PC-9 (cell line): ENCODE measurements at regions of chr10 and their contacts with region 1.

Region 1: DNA sequence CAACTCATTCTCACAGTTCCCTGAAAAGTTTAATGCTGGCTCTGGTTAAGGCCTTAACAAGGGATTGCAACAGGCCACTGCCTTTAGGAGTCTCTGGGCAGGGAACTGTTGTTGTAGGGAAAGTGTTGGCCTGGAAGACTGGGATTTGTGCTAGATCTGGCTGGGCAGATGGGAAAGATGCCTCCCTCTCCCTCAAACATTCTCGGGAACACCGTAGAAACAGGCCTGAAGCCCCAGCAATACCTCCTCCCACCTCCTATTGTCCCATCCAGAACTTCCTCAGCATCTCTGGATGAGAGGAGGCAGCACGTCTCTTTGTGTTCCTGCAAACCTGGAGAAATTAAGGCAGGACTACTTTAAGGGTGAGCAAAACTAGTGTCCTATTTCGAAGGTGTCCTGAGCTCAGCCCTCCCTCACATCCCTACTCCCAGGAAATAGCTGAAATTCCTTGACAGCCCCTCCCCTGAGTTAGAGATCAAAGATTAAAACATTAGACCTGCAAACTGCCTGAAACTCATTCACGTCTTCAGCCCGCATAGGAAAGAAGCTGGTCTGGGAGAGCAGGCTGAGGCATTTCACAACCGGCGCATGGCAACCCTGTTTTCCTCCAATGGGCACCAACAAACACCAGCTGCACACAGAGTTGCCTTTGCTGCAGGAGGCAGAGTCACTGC is 10.9 kb upstream of the MAP3K8 start:
- DNase-seq: peak; percentile 92 to 96
- H3K4me3 ChIP-seq: 0 out of 2 replicates have a peak overlapping the region, but pooled peaks have one; percentile 24
- H3K27ac ChIP-seq: peak overlapping the region; percentile 91
- H3K4me1 ChIP-seq: peaks cover 47% of the 10 kb centered on the region
- H3K27me3 ChIP-seq: no peaks in the 10 kb centered on the region
- CTCF ChIP-seq: no peak

Region 2: GRCh38 chr10:30348378-30348776 is 74.7 kb before region 1 on chr10:
- CTCF ChIA-PET with region 1: no interaction called
- POLR2A ChIA-PET with region 1: interaction called, 10 read pairs
- intact Hi-C with region 1: no loop called
- DNase-seq: no peak
- H3K4me3 ChIP-seq: peak overlapping the region; percentile 78
- H3K27ac ChIP-seq: peak overlapping the region; percentile 70
- H3K4me1 ChIP-seq: peaks cover 8% of the 10 kb centered on the region
- H3K27me3 ChIP-seq: no peaks in the 10 kb centered on the region
- CTCF ChIP-seq: no peak

Region 3: DNA sequence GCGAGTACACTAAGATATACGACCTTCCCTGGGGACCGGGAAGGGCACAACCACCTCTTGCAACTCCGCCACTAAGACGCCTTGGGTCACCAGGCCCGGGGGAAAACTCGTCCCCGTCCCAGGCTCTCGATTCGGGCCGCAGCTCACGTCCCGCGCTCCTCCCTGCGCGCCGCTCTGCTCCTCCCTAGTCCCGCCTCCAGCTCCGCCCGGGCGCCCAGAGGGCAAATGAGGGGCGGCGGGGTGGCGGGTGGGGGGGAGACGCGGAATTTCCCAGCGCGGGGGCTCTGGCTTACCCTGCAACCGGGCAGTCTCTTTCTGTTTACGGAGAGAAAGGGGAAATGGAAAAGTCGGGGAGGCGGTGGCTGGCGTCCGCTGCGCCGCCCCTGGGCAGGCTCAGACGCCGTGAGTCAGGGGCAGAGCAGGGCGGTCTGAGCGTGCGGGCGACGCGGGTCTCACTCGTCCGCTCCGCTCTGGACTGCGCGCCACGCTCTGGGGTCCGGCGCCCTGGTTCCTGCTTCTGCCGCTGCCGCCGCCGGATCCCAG is 10.7 kb after region 1 on chr10 and contains the start of gene MAP3K8:
- CTCF ChIA-PET with region 1: interaction called, 4 read pairs
- POLR2A ChIA-PET with region 1: interaction called, 36 read pairs
- intact Hi-C with region 1: loop called (anchors 1 kb)
- DNase-seq: peak; percentile 73 to 94
- H3K4me3 ChIP-seq: peak within 1 kb of the TSS; percentile 95
- H3K27ac ChIP-seq: peak within 1 kb of the TSS; percentile 95
- H3K4me1 ChIP-seq: peaks cover 67% of the 10 kb centered on the region
- H3K27me3 ChIP-seq: no peaks in the 10 kb centered on the region
- CTCF ChIP-seq: no peak
- total RNA-seq, gene MAP3K8: 14.3 and 16.4 TPM in 2 replicates

Region 4: DNA sequence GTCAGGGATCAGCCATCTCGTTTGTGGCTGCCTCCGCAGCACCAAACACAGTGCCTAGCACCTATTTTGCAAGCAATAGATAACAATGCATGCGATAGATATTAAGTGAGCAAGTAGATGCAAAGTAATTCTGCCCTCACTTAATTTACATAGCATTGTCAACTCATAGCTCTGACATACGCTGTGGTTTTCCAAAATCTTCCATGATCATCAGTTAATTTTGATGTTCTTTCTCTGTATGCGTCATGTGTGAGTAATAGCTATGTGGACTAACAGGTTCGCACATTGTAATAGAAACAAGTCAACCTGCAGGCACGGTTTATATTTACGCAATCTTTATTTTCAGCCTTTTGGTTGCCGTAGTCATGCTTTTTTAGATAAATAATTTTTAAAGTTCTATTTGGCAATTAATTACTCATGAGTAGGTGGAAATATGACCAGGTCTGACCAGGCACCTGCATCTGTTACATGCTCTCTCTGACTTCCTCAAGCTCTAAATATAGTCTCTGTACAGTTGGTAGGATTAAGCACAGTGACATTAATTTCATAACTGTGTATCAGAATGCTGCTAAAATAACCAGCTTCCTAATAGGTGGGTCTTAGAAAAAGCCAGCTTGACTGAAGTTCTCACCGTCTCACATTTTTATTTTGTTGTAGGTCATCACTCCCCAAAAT is 24.1 kb after region 1 on chr10:
- CTCF ChIA-PET with region 1: no interaction called
- POLR2A ChIA-PET with region 1: interaction called, 8 read pairs
- intact Hi-C with region 1: loop called (anchors 1 kb)
- DNase-seq: peak; percentile 31 to 95
- H3K4me3 ChIP-seq: peak overlapping the region; percentile 7; the same call in 1 of the 2 replicates
- H3K27ac ChIP-seq: peak overlapping the region; percentile 81
- H3K4me1 ChIP-seq: peaks cover 24% of the 10 kb centered on the region
- H3K27me3 ChIP-seq: no peaks in the 10 kb centered on the region
- CTCF ChIP-seq: no peak

Region 5: DNA sequence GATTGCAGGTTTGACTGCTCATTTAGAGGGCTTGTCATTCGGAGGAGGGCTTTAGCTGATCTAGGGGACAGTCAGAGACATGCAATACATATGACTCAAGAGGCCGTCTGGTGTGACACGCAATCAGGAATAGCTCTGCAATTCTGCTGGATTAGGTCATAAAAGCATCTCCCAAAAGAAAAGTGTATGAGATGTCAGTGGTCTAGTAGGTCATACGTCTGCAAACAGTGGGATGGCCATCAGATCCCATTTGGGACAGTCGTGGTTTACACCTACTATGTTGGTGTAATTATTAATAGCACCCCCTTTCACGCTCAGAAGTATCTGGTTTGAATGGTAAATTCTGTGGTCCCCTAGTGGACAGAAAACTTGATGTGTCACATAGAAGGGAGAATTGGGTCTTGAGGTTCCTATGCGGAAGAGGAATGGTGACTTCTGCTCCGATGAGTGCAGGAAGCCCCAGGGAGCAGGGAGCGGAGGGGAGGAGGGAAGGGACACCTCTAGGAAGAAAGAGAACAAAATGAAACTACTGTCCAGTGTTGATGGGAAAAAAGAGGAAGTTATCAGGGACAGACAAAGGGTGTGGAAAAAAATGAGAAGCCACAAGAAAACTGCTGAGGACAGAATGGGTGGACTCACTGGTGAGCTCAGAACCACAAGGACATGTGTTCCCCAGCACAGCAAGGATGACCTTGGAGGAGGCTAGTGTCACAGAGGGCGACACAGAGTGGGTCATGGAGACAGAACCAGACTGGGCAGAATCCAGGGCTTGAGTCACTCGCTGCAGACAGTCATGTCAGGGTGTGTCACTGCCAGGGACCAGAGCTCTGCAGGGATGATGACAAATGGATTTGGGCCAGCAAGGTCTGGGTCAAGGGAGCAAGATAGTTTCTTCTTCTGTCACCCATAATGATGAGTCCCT is 70.8 kb after region 1 on chr10:
- CTCF ChIA-PET with region 1: no interaction called
- POLR2A ChIA-PET with region 1: no interaction called
- intact Hi-C with region 1: loop called (anchors 2 kb)
- DNase-seq: peak; percentile 49 to 63
- H3K4me3 ChIP-seq: no peak overlapping the region
- H3K27ac ChIP-seq: no peak overlapping the region
- H3K4me1 ChIP-seq: peaks cover 46% of the 10 kb centered on the region
- H3K27me3 ChIP-seq: no peaks in the 10 kb centered on the region
- CTCF ChIP-seq: no peak

Region 6: GRCh38 chr10:31507427-31507826 is 1084.3 kb after region 1 on chr10:
- CTCF ChIA-PET with region 1: no interaction called
- POLR2A ChIA-PET with region 1: no interaction called
- intact Hi-C with region 1: no loop called
- DNase-seq: no peak
- H3K4me3 ChIP-seq: no peak overlapping the region
- H3K27ac ChIP-seq: no peak overlapping the region
- H3K4me1 ChIP-seq: no peaks in the 10 kb centered on the region
- H3K27me3 ChIP-seq: no peaks in the 10 kb centered on the region
- CTCF ChIP-seq: no peak

Region 7: DNA sequence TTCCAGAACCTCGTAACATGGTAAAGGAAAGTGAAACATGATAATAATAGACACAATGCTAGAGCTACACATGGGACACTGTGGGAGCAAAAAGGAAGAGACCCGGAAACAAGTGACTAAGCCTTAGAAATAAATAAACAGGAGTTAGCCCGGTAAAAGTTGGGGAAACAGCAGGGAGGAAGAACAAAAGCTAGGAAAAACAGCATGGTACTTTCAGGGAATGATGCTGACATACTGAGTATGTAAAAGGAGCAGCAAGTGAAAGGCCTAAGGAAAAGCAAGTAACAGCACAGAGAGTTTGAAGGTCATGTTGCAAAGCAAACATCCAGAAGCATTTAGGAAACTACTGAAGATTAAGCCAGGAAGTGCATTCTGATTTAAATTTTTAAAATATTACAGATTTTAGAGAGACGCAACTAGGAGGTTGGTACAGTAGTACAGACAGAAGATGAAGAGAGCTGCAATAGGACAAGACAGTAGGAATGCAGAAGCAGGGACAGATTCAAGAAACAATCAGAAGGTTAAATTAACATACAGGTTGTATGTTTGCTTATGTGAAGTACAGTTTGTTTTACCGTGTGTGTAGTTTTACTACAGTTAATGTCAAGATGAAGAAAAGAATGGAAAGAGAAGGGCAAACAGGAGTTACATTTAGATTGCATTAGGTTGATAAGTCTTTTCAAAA is 1441.9 kb after region 1 on chr10:
- CTCF ChIA-PET with region 1: no interaction called
- POLR2A ChIA-PET with region 1: interaction called, 11 read pairs
- intact Hi-C with region 1: no loop called
- DNase-seq: no peak
- H3K4me3 ChIP-seq: no peak overlapping the region
- H3K27ac ChIP-seq: 0 out of 2 replicates have a peak overlapping the region, but pooled peaks have one; percentile 23
- H3K4me1 ChIP-seq: 0 out of 2 replicates have a peak, but pooled peaks cover 6% of the 10 kb centered on the region
- H3K27me3 ChIP-seq: no peaks in the 10 kb centered on the region
- CTCF ChIP-seq: no peak